ENCODE measurements at regions of chr11 and their contacts with region 1.

Region 1: GRCh38 chr11:1050581-1051355 is 14.2 kb upstream of the MUC6 start:
- DNase-seq: peak; percentile 82
- H3K4me3 Mint-ChIP-seq: no peak overlapping the region
- H3K27ac Mint-ChIP-seq: no peak overlapping the region
- H3K4me1 Mint-ChIP-seq: peaks cover 2% of the 10 kb centered on the region
- H3K27me3 Mint-ChIP-seq: peaks cover 18% of the 10 kb centered on the region

Region 2: GRCh38 chr11:848380-848931 is 202.3 kb before region 1 on chr11:
- CTCF ChIA-PET with region 1: interaction called, 10 read pairs
- intact Hi-C with region 1: loop called (anchors 1 kb)
- DNase-seq: peak; percentile 68
- H3K4me3 Mint-ChIP-seq: no peak overlapping the region
- H3K27ac Mint-ChIP-seq: no peak overlapping the region
- H3K4me1 Mint-ChIP-seq: peaks cover 12% of the 10 kb centered on the region
- H3K27me3 Mint-ChIP-seq: peaks cover 5% of the 10 kb centered on the region

Region 3: GRCh38 chr11:1005928-1006327 is 44.8 kb before region 1 on chr11:
- CTCF ChIA-PET with region 1: no interaction called
- intact Hi-C with region 1: no loop called
- DNase-seq: no peak
- H3K4me3 Mint-ChIP-seq: no peak overlapping the region
- H3K27ac Mint-ChIP-seq: no peak overlapping the region
- H3K4me1 Mint-ChIP-seq: no peaks in the 10 kb centered on the region
- H3K27me3 Mint-ChIP-seq: no peaks in the 10 kb centered on the region